Activated CD4-positive, alpha-beta T cell treated with anti-CD3 and anti-CD28 coated beads for 36 hours (primary cell): ENCODE measurements at regions of chr22 and their contacts with region 1.

Region 1: DNA sequence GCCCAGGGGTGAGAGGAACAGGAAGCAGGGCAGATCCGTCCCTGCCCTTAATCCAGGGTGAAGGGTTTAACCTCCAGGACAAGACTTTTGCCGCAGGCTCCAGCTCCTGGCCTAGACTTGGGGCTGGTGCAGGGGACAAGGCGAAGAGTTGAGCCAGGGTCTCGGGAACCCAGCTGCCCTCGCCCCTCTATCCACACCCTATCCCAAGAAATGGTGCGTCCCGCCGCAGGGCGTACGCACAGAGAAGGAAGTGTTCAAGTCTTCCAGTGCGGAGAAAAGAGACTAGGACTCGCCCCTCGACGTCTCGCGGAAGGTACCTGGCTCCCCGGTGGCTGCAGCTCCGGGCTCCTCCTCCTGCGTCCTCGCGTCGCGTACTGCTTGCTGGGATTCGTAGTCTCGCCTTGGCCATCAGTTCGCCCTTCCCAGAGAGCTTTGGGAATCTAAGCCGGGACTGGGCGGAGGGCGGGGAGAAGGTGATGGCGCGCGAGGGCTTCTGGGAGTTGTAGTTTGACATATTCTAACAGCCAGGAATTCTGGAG is at the start of gene ZMAT5:
- DNase-seq: peak; percentile 96
- ATAC-seq: peak; percentile 97
- H3K4me3 Mint-ChIP-seq: peak within 1 kb of the TSS; percentile 99
- H3K27ac Mint-ChIP-seq: peak within 1 kb of the TSS; percentile 98
- H3K4me1 Mint-ChIP-seq: peaks cover 31% of the 10 kb centered on the region
- H3K27me3 Mint-ChIP-seq: no peaks in the 10 kb centered on the region
- total RNA-seq, gene ZMAT5: 19.2 to 25.1 TPM

Region 2: DNA sequence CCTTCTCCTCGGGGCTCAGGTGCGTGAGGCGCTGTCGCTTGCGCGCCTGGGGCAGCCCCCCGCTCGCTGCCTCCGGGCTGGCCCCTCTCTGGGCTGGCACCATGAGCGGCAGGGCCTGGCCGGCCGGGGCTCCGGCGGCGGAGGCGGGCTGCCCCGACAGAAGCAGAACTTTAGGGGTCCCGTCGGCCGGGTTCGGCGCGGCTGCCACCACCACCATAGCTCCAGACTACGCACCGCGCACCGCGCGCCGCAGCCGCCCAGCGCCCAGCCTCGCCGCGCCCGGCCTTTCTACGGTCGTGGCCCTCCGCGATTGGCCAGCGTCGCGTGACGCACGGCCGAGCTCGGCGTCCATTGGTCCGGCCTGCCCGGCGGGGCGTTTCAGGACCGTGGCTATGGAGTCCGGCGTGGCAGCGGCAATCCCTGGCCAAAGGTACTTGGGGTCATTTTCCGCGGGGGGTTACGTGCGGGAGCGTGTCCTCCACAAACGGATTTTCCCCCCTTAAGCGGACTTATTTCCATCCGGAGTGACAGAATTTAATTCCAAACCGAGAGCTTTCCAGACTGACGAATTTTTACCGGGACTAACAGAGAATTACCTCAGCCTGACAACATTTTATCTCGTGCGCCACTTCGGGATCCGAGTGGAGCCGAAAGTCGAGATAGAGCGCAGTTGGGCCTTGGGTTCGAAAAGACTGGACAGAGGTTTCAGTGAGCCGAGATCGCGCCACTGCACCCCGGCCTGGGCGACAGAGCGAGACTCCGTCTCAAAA is 966.2 kb before region 1 on chr22 and contains the start of gene XBP1:
- CTCF ChIA-PET with region 1: interaction called, 3 read pairs
- POLR2A ChIA-PET with region 1: no interaction called
- intact Hi-C with region 1: loop called in 1 of 2 experiments (anchors 5 kb)
- DNase-seq: peak; percentile 93
- ATAC-seq: peak; percentile 85
- H3K4me3 Mint-ChIP-seq: peak within 1 kb of the TSS; percentile 84
- H3K27ac Mint-ChIP-seq: peak within 1 kb of the TSS; percentile 99
- H3K4me1 Mint-ChIP-seq: peaks cover 44% of the 10 kb centered on the region
- H3K27me3 Mint-ChIP-seq: no peaks in the 10 kb centered on the region
- total RNA-seq, gene XBP1: 88.8 to 101 TPM

Region 3: DNA sequence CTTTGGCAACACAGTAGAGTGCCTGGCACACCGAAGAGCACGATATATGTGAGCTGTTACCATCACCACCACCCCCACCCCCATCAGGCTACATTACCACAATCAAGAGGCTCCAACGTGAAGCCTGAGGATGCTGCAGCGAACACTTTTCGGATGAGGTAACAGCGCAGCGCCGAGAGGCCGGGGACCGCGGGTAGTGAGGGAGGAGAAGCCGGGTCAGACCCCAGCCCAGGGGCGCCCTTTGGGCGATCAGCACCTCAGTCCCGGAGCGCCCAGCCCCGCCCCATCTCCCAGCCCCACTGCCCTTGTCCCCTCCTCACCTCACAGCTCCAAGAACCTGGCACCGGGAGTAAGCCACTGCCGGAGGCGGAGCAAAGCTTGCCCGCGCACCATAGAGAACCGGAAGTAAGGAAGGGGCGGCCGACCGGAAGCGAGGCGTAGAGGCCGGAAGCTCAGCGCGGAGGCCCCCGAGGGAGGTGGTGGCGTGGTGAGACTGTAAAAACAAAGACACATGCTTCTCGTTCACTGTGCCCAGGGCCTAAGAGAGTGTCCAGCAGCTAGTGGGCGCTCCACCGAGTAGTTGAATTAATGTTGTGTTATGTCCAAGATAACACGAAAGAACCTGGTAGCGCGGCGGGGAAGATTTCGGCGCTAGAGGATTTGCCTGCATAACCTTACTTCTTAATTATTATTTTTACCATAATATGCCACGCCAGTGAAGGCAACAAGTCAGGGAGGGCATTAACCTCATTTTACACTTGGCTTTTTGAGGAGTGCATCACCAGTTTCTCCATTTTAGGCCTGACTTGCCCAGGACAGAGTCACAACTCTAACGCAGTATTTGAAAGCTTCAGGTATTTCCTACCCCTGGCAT is 213.1 kb before region 1 on chr22 and contains the start of gene THOC5:
- CTCF ChIA-PET with region 1: no interaction called
- POLR2A ChIA-PET with region 1: interaction called, 4 read pairs
- intact Hi-C with region 1: loop called in 1 of 2 experiments (anchors 1 kb)
- DNase-seq: peak; percentile 94
- ATAC-seq: peak; percentile 99
- H3K4me3 Mint-ChIP-seq: peak within 1 kb of the TSS; percentile 96
- H3K27ac Mint-ChIP-seq: peak within 1 kb of the TSS; percentile 92
- H3K4me1 Mint-ChIP-seq: peaks cover 13% of the 10 kb centered on the region
- H3K27me3 Mint-ChIP-seq: no peaks in the 10 kb centered on the region
- total RNA-seq, gene THOC5: 52.4 to 65.7 TPM

Region 4: GRCh38 chr22:29617922-29618629 is 148.6 kb before region 1 on chr22:
- CTCF ChIA-PET with region 1: no interaction called
- POLR2A ChIA-PET with region 1: interaction called, 3 read pairs
- intact Hi-C with region 1: loop called in 1 of 2 experiments (anchors 5 kb)
- DNase-seq: no peak
- ATAC-seq: peak; percentile 89
- H3K4me3 Mint-ChIP-seq: peak overlapping the region; percentile 15
- H3K27ac Mint-ChIP-seq: peak overlapping the region; percentile 32
- H3K4me1 Mint-ChIP-seq: peaks cover 42% of the 10 kb centered on the region
- H3K27me3 Mint-ChIP-seq: no peaks in the 10 kb centered on the region

Region 5: GRCh38 chr22:29813563-29813962 is 46.9 kb after region 1 on chr22:
- CTCF ChIA-PET with region 1: no interaction called
- POLR2A ChIA-PET with region 1: no interaction called
- intact Hi-C with region 1: no loop called
- DNase-seq: no peak
- ATAC-seq: no peak
- H3K4me3 Mint-ChIP-seq: no peak overlapping the region
- H3K27ac Mint-ChIP-seq: no peak overlapping the region
- H3K4me1 Mint-ChIP-seq: no peaks in the 10 kb centered on the region
- H3K27me3 Mint-ChIP-seq: no peaks in the 10 kb centered on the region

Region 6: DNA sequence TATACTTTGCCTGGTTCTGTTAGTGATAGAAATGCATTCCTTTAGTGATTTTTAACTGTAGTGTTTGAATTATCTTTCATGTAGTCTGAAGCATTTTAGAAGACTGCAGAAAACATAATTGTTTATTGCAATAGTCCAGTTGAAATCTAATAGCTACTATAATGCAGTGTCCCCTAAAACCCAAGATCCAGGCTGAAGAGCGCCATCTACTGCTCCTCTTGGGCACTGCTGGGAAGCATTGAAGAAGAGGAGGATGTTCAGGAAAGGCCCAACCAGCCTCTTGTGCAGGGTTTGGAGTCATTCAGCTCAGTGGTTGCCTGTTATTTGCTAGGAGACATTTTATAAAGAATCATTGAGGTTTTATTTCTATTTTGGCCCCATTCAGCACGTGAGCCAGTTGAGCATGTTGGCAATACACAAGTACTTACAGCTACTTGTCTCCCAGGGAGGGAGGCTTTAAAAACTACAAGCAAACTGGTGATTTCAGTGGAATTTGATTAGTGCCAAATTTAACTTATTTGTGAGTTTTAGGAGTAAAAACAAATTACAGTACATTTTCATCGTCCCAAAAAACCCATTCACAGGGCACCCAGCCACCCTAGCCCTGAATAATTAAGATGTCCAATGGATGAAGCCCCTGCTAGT is 238.6 kb after region 1 on chr22:
- CTCF ChIA-PET with region 1: interaction called, 3 read pairs
- POLR2A ChIA-PET with region 1: no interaction called
- intact Hi-C with region 1: loop called (anchors 2 to 5 kb)
- DNase-seq: peak; percentile 80
- ATAC-seq: peak; percentile 86
- H3K4me3 Mint-ChIP-seq: no peak overlapping the region
- H3K27ac Mint-ChIP-seq: no peak overlapping the region
- H3K4me1 Mint-ChIP-seq: peaks cover 5% of the 10 kb centered on the region
- H3K27me3 Mint-ChIP-seq: no peaks in the 10 kb centered on the region

Region 7: GRCh38 chr22:30356449-30357235 is 589.9 kb after region 1 on chr22 and contains the starts of genes CCDC157 and SF3A1:
- CTCF ChIA-PET with region 1: no interaction called
- POLR2A ChIA-PET with region 1: no interaction called
- intact Hi-C with region 1: loop called in 1 of 2 experiments (anchors 1 kb)
- DNase-seq: peak; percentile 94
- ATAC-seq: peak; percentile 93
- H3K4me3 Mint-ChIP-seq: peak within 1 kb of the TSS; percentile 92
- H3K27ac Mint-ChIP-seq: peak within 1 kb of the TSS; percentile 90
- H3K4me1 Mint-ChIP-seq: peaks cover 48% of the 10 kb centered on the region
- H3K27me3 Mint-ChIP-seq: no peaks in the 10 kb centered on the region
- total RNA-seq, gene CCDC157: 2.4 to 3.7 TPM
- total RNA-seq, gene SF3A1: 254 to 499 TPM